Heart right ventricle (tissue), 16 donors: ENCODE measurements at regions of chr1 and their contacts with region 1.

Region 1: DNA sequence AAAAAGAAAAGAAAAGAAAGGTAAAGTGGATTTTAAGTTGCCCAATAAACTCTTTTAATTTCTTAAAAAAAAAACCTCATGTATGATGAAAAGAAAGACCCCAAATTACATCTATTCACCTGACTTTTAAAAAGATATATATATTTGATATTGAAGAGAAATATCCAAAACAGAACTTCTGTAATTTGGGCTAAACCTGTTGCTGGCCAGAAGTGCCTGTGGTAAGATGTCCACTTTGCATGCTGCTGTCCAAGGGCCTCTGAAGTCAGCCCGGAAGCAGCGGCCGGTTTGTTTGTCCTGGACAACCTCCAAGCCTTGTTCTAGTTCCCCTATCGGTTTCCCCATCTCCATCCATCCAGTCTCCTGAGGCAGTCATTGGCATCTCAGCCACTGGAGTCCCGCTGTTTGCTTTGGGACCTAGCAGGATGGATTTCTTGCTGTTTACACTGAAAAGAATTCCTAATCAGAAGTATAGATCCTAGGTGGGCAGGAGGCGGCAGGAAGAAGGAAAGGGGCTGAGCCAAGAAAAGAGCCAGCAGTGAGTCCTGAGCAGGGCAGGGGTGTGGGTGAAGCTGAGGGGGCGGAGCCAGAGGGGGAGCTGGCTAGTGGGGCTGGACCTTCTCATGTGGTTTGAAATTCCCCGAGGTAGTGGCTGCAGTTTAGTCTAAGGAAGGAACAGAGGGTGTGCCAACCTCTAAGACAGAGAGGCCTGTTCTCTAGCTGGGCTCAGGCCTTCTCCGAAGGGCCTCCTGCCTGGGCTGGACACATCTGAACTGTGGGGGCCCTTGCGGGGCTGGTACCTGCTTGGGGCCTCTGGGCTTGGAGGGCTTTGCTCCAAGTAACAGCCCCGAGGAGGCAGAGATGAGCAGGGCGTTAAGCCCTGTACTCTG is 3.3 kb downstream of the NCMAP start:
- DNase-seq: peak; percentile 29 to 55
- ATAC-seq: peak in 5 of 8 donors; percentile 49 to 69 (median 55)
- H3K4me3 ChIP-seq: no peak overlapping the region
- H3K27ac ChIP-seq: no peak overlapping the region
- H3K4me1 ChIP-seq: peaks cover 0 to 17% (median 6%) of the 10 kb centered on the region in 9 donors
- H3K27me3 ChIP-seq: peaks cover 0 to 48% (median 33%) of the 10 kb centered on the region in 7 donors
- CTCF ChIP-seq: no peak

Region 2: DNA sequence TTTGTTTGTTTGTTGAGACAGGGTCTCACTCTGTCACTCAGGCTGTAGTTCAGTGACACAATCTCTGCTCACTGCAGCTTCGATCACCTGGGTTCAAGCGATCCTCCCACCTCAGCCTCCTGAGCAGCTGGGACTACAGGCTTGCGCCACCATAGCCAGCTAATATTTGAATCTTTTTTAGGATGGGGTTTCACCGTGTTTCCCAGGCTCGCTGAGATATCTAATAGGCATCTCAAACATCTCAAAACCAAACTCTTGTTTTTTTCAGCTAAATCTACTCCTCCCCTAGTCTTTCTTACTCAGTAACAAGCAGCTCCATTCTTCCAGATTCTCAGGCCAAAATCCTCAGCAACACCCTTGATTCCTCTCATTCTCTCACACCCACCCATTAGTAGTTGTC is 62.0 kb after region 1 on chr1:
- intact Hi-C with region 1: loop called in 1 of 10 experiments (anchors 10 kb)
- DNase-seq: no peak
- ATAC-seq: no peak
- H3K4me3 ChIP-seq: no peak overlapping the region
- H3K27ac ChIP-seq: no peak overlapping the region
- H3K4me1 ChIP-seq: no peaks in the 10 kb centered on the region
- H3K27me3 ChIP-seq: peaks cover 0 to 27% (median 6%) of the 10 kb centered on the region in 7 donors
- CTCF ChIP-seq: no peak